ENCODE measurements at regions of chr3 and their contacts with region 1.

Region 1: DNA sequence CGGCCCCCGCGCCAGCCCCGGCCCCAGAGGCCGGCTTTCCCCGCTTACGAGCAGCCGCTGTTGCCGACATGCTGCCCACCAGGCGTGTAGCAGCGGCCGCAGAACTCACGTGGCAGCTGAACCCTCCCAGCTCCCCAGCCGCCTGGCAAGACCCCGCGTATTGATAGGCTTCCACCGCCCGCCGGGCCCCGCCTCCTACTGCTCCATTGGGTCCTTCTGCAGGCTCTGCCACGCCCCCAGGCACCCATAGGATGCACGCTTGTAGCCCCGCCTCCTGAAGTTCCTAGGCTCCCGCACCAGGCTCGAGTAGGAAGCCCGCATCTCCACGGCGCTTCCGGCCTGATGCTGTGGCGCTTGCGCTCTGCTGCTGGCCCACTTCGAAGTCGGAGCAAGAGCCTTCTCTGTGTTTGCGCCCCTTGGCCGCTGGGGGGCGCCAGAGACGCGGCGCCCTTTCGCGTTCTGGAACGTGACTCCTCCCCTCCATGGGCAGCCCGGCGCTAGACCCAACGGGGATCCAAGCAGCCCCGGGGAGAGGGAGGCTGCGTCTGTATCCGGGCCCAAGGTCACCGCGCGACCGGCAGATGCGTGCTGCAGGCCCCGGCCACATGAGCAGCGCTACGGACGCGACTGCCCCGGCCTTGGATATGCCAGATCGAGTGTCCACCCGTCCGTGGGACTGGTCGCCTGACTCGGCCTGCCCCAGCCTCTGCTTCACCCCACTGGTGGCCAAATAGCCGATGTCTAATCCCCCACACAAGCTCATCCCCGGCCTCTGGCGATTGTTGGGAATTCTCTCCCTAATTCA is at the starts of genes PARP3 and RRP9:
- DNase-seq: peak; percentile 97 to 100 (median 99)
- ATAC-seq: peak; percentile 98
- H3K4me3 ChIP-seq: peak within 1 kb of the TSS; percentile 78
- H3K4me3 Mint-ChIP-seq: peak within 1 kb of the TSS; percentile 72 to 94 (median 90)
- H3K27ac ChIP-seq: peak within 1 kb of the TSS; percentile 80
- H3K27ac Mint-ChIP-seq: peak within 1 kb of the TSS; percentile 78 to 92 (median 89)
- H3K4me1 ChIP-seq: peaks cover 19 to 23% of the 10 kb centered on the region in 2 donors
- H3K4me1 Mint-ChIP-seq: peaks cover 22 to 40% (median 31%) of the 10 kb centered on the region in 7 donors
- H3K27me3 ChIP-seq: no peaks in the 10 kb centered on the region
- H3K27me3 Mint-ChIP-seq: no peaks in the 10 kb centered on the region
- total RNA-seq, gene PARP3: 7.7 to 21.5 (median 11.2) TPM
- total RNA-seq, gene RRP9: 10.2 to 34.2 (median 16.6) TPM

Region 2: DNA sequence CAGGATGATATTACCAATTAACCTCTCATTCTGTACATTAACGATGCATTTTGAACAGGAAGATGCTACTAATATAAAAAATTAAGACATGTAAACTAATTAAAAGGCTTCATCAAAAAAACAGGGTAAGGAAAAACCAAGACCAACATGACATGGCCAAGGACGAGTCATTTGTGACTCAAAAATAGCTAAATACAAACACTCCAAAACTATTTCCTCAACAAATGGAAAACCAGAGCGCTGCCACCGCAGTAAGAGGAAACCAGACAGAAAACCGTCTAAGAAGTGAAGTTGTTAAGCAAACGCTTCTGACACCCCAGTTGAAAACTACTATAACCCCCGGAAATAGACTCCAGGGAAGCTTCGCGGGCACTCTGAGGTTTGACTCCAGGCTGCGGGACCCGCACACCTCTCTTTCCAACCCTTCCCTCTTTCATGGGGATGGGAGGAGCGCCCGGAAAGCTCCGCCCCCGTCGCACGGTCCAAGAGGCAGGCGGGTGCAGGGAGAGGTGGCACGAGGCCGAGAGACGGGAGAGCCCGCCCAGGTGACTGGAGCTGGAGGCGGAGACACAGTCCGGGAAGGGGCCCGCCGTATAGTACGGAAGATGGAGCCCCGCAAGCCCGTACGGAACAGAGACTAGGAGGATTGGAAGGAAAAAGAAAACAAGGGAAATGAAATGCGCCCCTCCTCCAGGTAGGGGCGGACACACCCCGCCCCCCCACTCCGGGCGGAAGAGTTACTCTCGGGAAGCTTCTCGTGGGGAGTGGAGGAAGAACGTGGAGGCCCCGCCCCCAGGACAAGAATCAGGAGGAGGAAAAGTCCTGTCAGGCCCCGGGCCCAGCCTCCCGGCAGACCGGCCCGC is 442.9 kb before region 1 on chr3:
- CTCF ChIA-PET with region 1: interaction called, 6 read pairs
- POLR2A ChIA-PET with region 1: no interaction called
- intact Hi-C with region 1: loop called (anchors 1 kb)
- DNase-seq: peak; percentile 52 to 90 (median 73)
- ATAC-seq: peak; percentile 58
- H3K4me3 ChIP-seq: peak overlapping the region; percentile 84
- H3K4me3 Mint-ChIP-seq: peak overlapping the region; percentile 87 to 100 (median 98)
- H3K27ac ChIP-seq: peak overlapping the region; percentile 90
- H3K27ac Mint-ChIP-seq: peak overlapping the region; percentile 90 to 99 (median 94)
- H3K4me1 ChIP-seq: peaks cover 10 to 14% of the 10 kb centered on the region in 2 donors
- H3K4me1 Mint-ChIP-seq: peaks cover 4 to 38% (median 35%) of the 10 kb centered on the region in 7 donors
- H3K27me3 ChIP-seq: no peaks in the 10 kb centered on the region
- H3K27me3 Mint-ChIP-seq: peaks cover 0 to 2% (median 0%) of the 10 kb centered on the region in 5 donors

Region 3: DNA sequence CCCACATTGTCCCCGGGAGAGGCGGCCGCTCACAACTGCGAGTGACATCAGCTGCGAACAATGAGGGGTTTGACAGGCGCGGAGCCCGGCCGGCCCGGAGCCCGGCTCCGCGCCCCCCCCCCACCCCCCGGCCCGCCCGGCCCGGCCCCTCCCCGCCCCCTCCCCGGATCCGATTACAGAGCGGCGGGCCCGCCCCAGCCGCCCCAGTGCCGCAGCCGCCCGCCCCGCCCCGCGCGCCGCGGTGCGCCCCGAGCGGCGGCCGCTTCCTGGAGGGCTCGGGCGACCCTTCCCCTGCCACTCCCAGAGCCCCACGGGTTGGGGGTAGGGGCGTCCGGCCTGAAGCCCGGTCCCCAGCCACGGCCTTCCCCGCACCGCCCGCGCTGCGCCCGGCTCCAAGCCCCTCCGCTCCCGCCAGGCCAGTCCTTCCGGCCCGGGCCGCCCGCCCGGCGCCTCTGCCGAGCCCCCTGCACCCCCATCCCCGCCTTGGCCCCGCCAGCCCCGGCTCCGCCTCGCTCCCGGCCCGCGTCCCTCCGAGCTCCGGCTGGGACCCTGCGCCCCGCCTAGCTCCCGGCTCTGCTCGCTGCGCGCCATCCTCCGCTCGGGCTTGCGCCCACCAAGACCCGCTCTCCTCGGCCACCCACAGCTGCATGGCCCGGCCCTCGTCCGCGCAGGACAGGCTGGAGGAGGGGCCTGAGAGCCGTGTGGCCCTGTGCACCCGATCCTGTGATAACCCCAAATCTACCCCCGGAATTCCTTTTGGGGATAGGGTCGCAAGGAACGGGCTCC is 25.6 kb after region 1 on chr3 and contains the start of gene PCBP4:
- CTCF ChIA-PET with region 1: no interaction called
- POLR2A ChIA-PET with region 1: interaction called, 34 read pairs
- intact Hi-C with region 1: loop called in 1 of 2 experiments (anchors 1 kb)
- DNase-seq: peak in 5 of 9 donors; percentile 17 to 61 (median 31)
- ATAC-seq: peak; percentile 79
- H3K4me3 ChIP-seq: peak within 1 kb of the TSS; percentile 70
- H3K4me3 Mint-ChIP-seq: peak within 1 kb of the TSS; percentile 77 to 95 (median 86)
- H3K27ac ChIP-seq: peak within 1 kb of the TSS; percentile 75
- H3K27ac Mint-ChIP-seq: peak within 1 kb of the TSS; percentile 36 to 80 (median 66)
- H3K4me1 ChIP-seq: peaks cover 7 to 9% of the 10 kb centered on the region in 2 donors
- H3K4me1 Mint-ChIP-seq: peaks cover 23 to 48% (median 25%) of the 10 kb centered on the region in 7 donors
- H3K27me3 ChIP-seq: no peaks in the 10 kb centered on the region
- H3K27me3 Mint-ChIP-seq: peaks cover 0 to 10% (median 0%) of the 10 kb centered on the region in 5 donors
- total RNA-seq, gene PCBP4: 12.1 to 21.1 (median 15.0) TPM

Region 4: DNA sequence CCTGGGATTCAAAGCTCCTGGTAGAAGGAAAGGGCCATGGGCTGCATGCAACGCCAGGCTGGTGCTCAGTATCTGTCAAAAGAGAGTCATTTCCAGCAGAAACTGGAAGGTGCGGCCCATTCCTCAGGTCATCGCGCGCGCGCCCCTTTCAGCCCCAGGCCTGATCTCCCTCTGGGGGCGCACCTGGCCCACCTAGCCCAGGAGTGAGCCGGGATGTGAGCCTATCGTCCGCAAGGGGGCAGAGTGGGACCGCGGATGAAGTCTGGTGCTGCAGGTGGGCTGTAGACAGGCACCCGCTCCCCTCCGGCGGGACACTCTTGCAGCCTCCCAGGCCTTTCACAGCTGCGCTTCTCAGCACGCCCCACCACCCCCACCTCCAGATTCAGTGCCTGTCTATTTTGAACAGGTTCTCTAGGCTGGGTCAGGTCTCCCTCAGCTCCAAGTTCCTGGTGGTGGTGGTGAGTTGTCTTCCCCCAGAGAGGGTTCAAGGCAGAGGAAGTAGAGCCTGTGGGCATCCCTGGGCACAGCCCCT is 59.5 kb after region 1 on chr3:
- CTCF ChIA-PET with region 1: interaction called, 5 read pairs
- POLR2A ChIA-PET with region 1: interaction called, 3 read pairs
- intact Hi-C with region 1: loop called (anchors 1 kb)
- DNase-seq: peak; percentile 73 to 86 (median 81)
- ATAC-seq: peak; percentile 98
- H3K4me3 ChIP-seq: no peak overlapping the region
- H3K4me3 Mint-ChIP-seq: peak overlapping the region in 2 of 10 donors; percentile 12 to 16
- H3K27ac ChIP-seq: no peak overlapping the region
- H3K27ac Mint-ChIP-seq: peak overlapping the region in 3 of 9 donors; percentile 8 to 41 (median 11)
- H3K4me1 ChIP-seq: peaks cover 6 to 22% of the 10 kb centered on the region in 2 donors
- H3K4me1 Mint-ChIP-seq: peaks cover 6 to 24% (median 16%) of the 10 kb centered on the region in 7 donors
- H3K27me3 ChIP-seq: no peaks in the 10 kb centered on the region
- H3K27me3 Mint-ChIP-seq: peaks cover 0 to 16% (median 0%) of the 10 kb centered on the region in 5 donors

Region 5: DNA sequence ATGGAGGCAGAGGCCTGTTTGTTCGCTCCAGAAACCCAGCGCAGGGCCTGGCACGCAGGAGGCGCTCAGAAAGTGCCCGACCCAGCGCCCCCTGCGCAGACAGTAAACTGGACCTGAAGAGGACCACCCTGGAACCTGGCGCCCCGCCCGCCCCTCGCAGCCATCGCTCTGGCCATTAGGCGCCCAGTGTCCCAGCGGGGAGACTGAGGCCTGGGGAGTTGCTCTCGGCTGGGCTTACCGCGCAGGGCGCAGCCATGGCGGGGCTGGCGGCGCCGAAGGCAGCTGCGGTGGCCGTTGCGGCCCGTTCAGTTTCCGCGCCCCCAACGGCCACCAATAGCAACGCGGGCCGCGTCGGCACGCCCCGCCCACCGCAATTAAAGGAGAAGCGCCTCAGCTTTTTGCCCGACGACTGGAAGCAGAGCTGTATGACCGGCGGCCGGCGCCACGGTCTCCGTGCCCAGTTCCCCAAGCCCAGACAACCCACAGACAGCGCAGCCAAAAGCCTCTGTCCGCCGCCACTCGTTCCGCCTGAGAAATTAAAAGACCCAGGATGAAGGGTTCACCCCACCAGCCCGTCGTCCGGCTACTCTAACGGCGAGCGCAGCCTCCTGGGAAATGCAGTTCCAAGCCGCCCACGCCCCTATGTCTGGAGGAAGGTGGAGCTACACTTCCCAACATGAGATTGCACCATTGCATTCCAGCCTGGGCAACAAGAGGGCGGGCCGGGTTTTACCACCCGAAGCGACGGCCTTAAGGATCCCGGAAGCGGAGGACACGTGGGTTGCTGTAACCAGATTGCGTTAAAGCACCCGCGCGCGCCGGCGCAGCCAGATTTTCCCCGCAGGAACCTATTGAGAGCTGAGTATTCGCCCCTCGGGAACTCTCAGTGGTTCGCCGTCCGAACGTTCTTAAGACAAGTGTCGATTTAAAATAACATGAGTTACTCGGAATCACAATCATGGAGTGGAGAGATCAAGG is 212.4 kb after region 1 on chr3 and contains the start of gene POC1A:
- CTCF ChIA-PET with region 1: no interaction called
- POLR2A ChIA-PET with region 1: no interaction called
- intact Hi-C with region 1: loop called in 1 of 2 experiments (anchors 1 kb)
- DNase-seq: peak; percentile 73 to 90 (median 82)
- ATAC-seq: peak; percentile 92
- H3K4me3 ChIP-seq: peak within 1 kb of the TSS; percentile 98
- H3K4me3 Mint-ChIP-seq: peak within 1 kb of the TSS; percentile 88 to 98 (median 96)
- H3K27ac ChIP-seq: peak within 1 kb of the TSS; percentile 85
- H3K27ac Mint-ChIP-seq: peak within 1 kb of the TSS; percentile 87 to 98 (median 94)
- H3K4me1 ChIP-seq: peaks cover 4 to 6% of the 10 kb centered on the region in 2 donors
- H3K4me1 Mint-ChIP-seq: peaks cover 5 to 22% (median 6%) of the 10 kb centered on the region in 7 donors
- H3K27me3 ChIP-seq: no peaks in the 10 kb centered on the region
- H3K27me3 Mint-ChIP-seq: peaks cover 0 to 1% (median 0%) of the 10 kb centered on the region in 5 donors
- total RNA-seq, gene POC1A: 0.58 to 19.7 (median 1.2) TPM

Region 6: DNA sequence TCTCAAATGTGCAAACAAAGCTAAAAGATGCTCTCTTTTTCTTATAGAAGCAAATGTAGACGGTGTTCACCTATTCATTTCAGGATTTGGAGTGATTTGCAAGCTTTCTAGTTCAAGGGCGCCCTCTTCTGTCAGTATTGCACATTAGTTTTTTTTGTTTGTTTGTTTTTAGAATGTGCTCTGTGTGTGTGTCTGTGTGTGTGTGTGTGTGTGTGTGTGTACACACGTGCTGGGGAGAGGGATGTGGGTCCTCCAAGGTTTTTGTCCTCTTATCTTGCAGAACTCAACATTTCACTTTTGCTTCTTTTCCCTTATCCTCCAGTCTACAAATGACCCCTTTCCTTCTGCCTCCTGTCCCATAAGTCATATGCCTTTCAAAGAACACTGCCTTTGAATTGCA is 397.6 kb after region 1 on chr3:
- CTCF ChIA-PET with region 1: no interaction called
- POLR2A ChIA-PET with region 1: no interaction called
- intact Hi-C with region 1: loop called in 1 of 2 experiments (anchors 1 kb)
- DNase-seq: peak in 7 of 9 donors; percentile 67 to 85 (median 76)
- ATAC-seq: peak; percentile 92
- H3K4me3 ChIP-seq: no peak overlapping the region
- H3K4me3 Mint-ChIP-seq: no peak overlapping the region
- H3K27ac ChIP-seq: no peak overlapping the region
- H3K27ac Mint-ChIP-seq: peak overlapping the region in 7 of 9 donors; percentile 1 to 78 (median 40)
- H3K4me1 ChIP-seq: no peaks in the 10 kb centered on the region
- H3K4me1 Mint-ChIP-seq: peaks cover 7 to 16% (median 8%) of the 10 kb centered on the region in 7 donors
- H3K27me3 ChIP-seq: no peaks in the 10 kb centered on the region
- H3K27me3 Mint-ChIP-seq: no peaks in the 10 kb centered on the region